ENCODE measurements at regions of chr6 and their contacts with region 1.

Region 1: DNA sequence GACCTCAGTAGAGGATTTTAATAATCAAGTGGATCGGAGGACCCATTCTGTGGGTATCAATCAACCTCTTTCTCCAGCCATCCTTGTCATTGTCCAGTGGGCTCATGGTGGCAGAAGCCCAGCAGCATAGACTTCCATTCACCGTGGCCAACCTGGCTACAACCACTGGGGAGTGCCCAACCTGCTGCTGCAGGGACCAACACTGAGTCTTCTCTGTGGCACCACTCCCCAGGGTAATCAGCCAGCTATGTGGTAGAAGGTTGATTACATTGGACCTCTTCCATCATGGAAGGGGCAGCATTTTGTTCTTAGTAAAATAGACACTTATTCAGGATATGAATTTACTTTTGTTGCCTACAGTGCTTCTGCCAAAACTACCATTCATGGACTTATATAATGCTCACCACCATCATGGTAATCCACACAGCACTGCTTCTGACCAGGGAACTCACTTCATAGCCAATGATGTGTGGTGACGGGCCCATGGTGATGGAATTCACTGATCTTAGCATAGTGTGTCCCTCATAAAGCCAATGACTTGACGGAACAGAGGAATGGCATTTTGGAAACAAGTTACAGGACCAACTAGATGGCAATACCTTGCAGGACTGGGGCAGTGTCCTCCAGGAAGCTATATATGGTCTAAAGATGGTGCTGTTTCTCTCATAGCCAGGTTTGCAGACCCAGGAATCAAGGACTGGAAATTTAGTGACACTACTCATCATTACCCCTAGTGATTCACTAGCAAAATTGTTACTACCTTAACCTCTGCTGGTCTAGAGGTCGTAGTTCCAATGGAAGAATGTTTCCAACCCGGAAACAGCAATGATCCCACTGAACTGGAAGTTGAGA is 7.6 kb downstream of the CD24 start:
- DNase-seq: no peak
- H3K4me3 ChIP-seq: no peak overlapping the region
- H3K27ac ChIP-seq: no peak overlapping the region
- H3K4me1 ChIP-seq: no peaks in the 10 kb centered on the region
- H3K27me3 ChIP-seq: peaks cover 4% of the 10 kb centered on the region
- CTCF ChIP-seq: no peak

Region 2: GRCh38 chr6:106783631-106784566 is 183.0 kb before region 1 on chr6:
- CTCF ChIA-PET with region 1: no interaction called
- POLR2A ChIA-PET with region 1: interaction called, 12 read pairs
- intact Hi-C with region 1: no loop called
- DNase-seq: no peak
- H3K4me3 ChIP-seq: no peak overlapping the region
- H3K27ac ChIP-seq: no peak overlapping the region
- H3K4me1 ChIP-seq: no peaks in the 10 kb centered on the region
- H3K27me3 ChIP-seq: no peaks in the 10 kb centered on the region
- CTCF ChIP-seq: no peak

Measured in A673 (cell line).